CD8-positive, alpha-beta T cell (primary cell): ENCODE measurements at regions of chr16 and their contacts with region 1.

Region 1: GRCh38 chr16:30091474-30092372 is at the start of gene TBX6:
- DNase-seq: peak; percentile 86 to 97 (median 92)
- ATAC-seq: peak; percentile 82
- H3K4me3 ChIP-seq: peak within 1 kb of the TSS; percentile 59 to 69
- H3K4me3 Mint-ChIP-seq: peak within 1 kb of the TSS; percentile 87
- H3K27ac ChIP-seq: peak within 1 kb of the TSS; percentile 58 to 69
- H3K27ac Mint-ChIP-seq: peak within 1 kb of the TSS; percentile 91
- H3K4me1 ChIP-seq: peaks cover 55% of the 10 kb centered on the region
- H3K4me1 Mint-ChIP-seq: peaks cover 48% of the 10 kb centered on the region
- H3K27me3 ChIP-seq: no peaks in the 10 kb centered on the region
- H3K27me3 Mint-ChIP-seq: no peaks in the 10 kb centered on the region
- CTCF ChIP-seq: peak; percentile 73
- total RNA-seq, gene TBX6: 0.16 to 0.22 TPM

Region 2: GRCh38 chr16:29900102-29900887 is 191.4 kb before region 1 on chr16 and contains the start of gene ASPHD1:
- CTCF ChIA-PET with region 1: no interaction called
- POLR2A ChIA-PET with region 1: no interaction called
- intact Hi-C with region 1: no loop called
- DNase-seq: peak in 5 of 9 experiments; percentile 68 to 85 (median 80)
- ATAC-seq: peak; percentile 87
- H3K4me3 ChIP-seq: peak within 1 kb of the TSS; percentile 40 to 58
- H3K4me3 Mint-ChIP-seq: peak within 1 kb of the TSS; percentile 73
- H3K27ac ChIP-seq: no peak within 1 kb of the TSS
- H3K27ac Mint-ChIP-seq: no peak within 1 kb of the TSS
- H3K4me1 ChIP-seq: peaks cover 13% of the 10 kb centered on the region
- H3K4me1 Mint-ChIP-seq: peaks cover 8% of the 10 kb centered on the region
- H3K27me3 ChIP-seq: peaks cover 8 to 36% of the 10 kb centered on the region in 2 experiments
- H3K27me3 Mint-ChIP-seq: peaks cover 23% of the 10 kb centered on the region
- CTCF ChIP-seq: no peak
- total RNA-seq, gene ASPHD1: not detected

Region 3: GRCh38 chr16:30075507-30076275 is 16.0 kb before region 1 on chr16 and contains the start of gene PPP4C:
- CTCF ChIA-PET with region 1: interaction called, 34 read pairs
- POLR2A ChIA-PET with region 1: interaction called, 16 read pairs
- intact Hi-C with region 1: loop called (anchors 1 kb)
- DNase-seq: peak; percentile 65 to 94 (median 89)
- ATAC-seq: peak; percentile 88
- H3K4me3 ChIP-seq: peak within 1 kb of the TSS; percentile 96 to 99
- H3K4me3 Mint-ChIP-seq: peak within 1 kb of the TSS; percentile 93
- H3K27ac ChIP-seq: peak within 1 kb of the TSS; percentile 82 to 92
- H3K27ac Mint-ChIP-seq: peak within 1 kb of the TSS; percentile 96
- H3K4me1 ChIP-seq: peaks cover 31% of the 10 kb centered on the region
- H3K4me1 Mint-ChIP-seq: peaks cover 38% of the 10 kb centered on the region
- H3K27me3 ChIP-seq: no peaks in the 10 kb centered on the region
- H3K27me3 Mint-ChIP-seq: no peaks in the 10 kb centered on the region
- CTCF ChIP-seq: no peak
- total RNA-seq, gene PPP4C: 89.4 to 97.4 TPM

Region 4: DNA sequence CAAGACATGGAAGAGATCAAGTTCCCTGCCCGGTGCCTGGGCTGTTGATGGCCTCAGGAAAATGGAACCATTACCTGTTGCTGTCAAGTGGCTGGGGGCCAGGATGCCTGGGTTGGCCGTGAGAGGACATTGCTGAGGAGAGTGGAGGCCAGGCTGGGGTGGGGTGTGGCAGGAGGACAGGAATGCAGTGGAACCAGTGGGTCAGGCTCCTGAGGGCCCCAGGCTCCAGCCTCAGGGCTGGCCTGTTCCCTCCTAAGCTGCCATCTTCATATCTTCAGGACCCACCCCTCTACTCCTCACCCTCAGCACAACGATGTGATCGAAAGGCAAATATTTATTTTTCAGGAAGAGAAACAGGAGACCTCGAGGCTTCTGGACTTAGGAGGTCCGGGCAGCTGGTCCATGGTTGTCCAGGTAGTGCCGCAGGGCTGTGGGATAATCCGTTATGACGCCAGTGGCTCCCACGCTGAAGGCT is 12.8 kb after region 1 on chr16:
- CTCF ChIA-PET with region 1: interaction called, 17 read pairs
- POLR2A ChIA-PET with region 1: interaction called, 3 read pairs
- intact Hi-C with region 1: no loop called
- DNase-seq: no peak
- ATAC-seq: no peak
- H3K4me3 ChIP-seq: no peak overlapping the region
- H3K4me3 Mint-ChIP-seq: no peak overlapping the region
- H3K27ac ChIP-seq: no peak overlapping the region
- H3K27ac Mint-ChIP-seq: no peak overlapping the region
- H3K4me1 ChIP-seq: no peaks in the 10 kb centered on the region
- H3K4me1 Mint-ChIP-seq: no peaks in the 10 kb centered on the region
- H3K27me3 ChIP-seq: no peaks in the 10 kb centered on the region
- H3K27me3 Mint-ChIP-seq: no peaks in the 10 kb centered on the region
- CTCF ChIP-seq: no peak

Region 5: GRCh38 chr16:30122604-30123160 is 31.0 kb after region 1 on chr16:
- CTCF ChIA-PET with region 1: interaction called, 5 read pairs
- POLR2A ChIA-PET with region 1: interaction called, 5 read pairs
- intact Hi-C with region 1: loop called (anchors 1 kb)
- DNase-seq: peak in 7 of 9 experiments; percentile 14 to 58 (median 34)
- ATAC-seq: peak; percentile 29
- H3K4me3 ChIP-seq: peak overlapping the region; percentile 83 to 85
- H3K4me3 Mint-ChIP-seq: peak overlapping the region; percentile 85
- H3K27ac ChIP-seq: peak overlapping the region; percentile 34 to 55
- H3K27ac Mint-ChIP-seq: peak overlapping the region; percentile 87
- H3K4me1 ChIP-seq: peaks cover 24% of the 10 kb centered on the region
- H3K4me1 Mint-ChIP-seq: peaks cover 27% of the 10 kb centered on the region
- H3K27me3 ChIP-seq: no peaks in the 10 kb centered on the region
- H3K27me3 Mint-ChIP-seq: no peaks in the 10 kb centered on the region
- CTCF ChIP-seq: no peak

Region 6: DNA sequence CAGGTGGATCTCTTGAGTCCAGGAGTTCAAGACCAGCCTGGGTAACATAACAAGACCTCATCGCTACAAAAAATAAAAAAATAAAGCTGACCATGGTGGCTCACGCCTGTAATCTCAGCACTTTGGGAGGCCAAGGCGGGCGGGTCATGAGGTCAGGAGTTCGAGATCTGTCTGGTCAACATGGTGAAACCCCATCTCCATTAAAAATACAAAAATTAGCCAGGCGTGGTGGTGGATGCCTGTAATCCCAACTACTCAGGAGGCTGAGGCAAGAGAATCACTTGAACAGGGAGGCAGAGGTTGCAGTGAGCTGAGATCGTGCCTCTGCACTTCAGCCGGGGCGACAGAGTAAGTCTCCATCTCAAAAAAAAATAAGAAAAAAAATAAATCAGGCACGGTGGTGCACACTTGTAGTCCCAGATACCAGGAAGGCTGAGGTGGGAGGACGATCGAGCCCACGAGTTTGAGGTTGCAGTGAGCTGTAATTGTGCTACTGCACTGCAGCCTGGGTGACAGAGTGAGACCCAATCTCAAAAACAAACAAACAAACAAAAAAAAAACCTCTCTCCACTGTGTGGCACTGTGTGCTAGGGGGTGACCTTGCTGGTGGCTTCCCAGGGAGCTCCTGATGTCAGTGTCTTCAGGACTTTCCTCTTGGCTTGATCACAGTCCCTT is 51.1 kb after region 1 on chr16:
- CTCF ChIA-PET with region 1: interaction called, 7 read pairs
- POLR2A ChIA-PET with region 1: interaction called, 6 read pairs
- intact Hi-C with region 1: loop called in 1 of 2 experiments (anchors 5 kb)
- DNase-seq: peak in 6 of 9 experiments; percentile 14 to 77 (median 40)
- ATAC-seq: peak; percentile 72
- H3K4me3 ChIP-seq: no peak overlapping the region
- H3K4me3 Mint-ChIP-seq: no peak overlapping the region
- H3K27ac ChIP-seq: no peak overlapping the region
- H3K27ac Mint-ChIP-seq: peak overlapping the region; percentile 30
- H3K4me1 ChIP-seq: peaks cover 24% of the 10 kb centered on the region
- H3K4me1 Mint-ChIP-seq: peaks cover 22% of the 10 kb centered on the region
- H3K27me3 ChIP-seq: no peaks in the 10 kb centered on the region
- H3K27me3 Mint-ChIP-seq: no peaks in the 10 kb centered on the region
- CTCF ChIP-seq: peak; percentile 44

Region 7: GRCh38 chr16:30183233-30184095 is 91.7 kb after region 1 on chr16 and contains the start of gene CORO1A:
- CTCF ChIA-PET with region 1: interaction called, 17 read pairs
- POLR2A ChIA-PET with region 1: interaction called, 130 read pairs
- intact Hi-C with region 1: no loop called
- DNase-seq: peak; percentile 58 to 94 (median 84)
- ATAC-seq: peak; percentile 41
- H3K4me3 ChIP-seq: peak within 1 kb of the TSS; percentile 97 to 99
- H3K4me3 Mint-ChIP-seq: peak within 1 kb of the TSS; percentile 95
- H3K27ac ChIP-seq: peak within 1 kb of the TSS; percentile 80 to 91
- H3K27ac Mint-ChIP-seq: peak within 1 kb of the TSS; percentile 96
- H3K4me1 ChIP-seq: peaks cover 34% of the 10 kb centered on the region
- H3K4me1 Mint-ChIP-seq: peaks cover 39% of the 10 kb centered on the region
- H3K27me3 ChIP-seq: no peaks in the 10 kb centered on the region
- H3K27me3 Mint-ChIP-seq: no peaks in the 10 kb centered on the region
- CTCF ChIP-seq: no peak
- total RNA-seq, gene CORO1A: 352 to 364 TPM

Region 8: DNA sequence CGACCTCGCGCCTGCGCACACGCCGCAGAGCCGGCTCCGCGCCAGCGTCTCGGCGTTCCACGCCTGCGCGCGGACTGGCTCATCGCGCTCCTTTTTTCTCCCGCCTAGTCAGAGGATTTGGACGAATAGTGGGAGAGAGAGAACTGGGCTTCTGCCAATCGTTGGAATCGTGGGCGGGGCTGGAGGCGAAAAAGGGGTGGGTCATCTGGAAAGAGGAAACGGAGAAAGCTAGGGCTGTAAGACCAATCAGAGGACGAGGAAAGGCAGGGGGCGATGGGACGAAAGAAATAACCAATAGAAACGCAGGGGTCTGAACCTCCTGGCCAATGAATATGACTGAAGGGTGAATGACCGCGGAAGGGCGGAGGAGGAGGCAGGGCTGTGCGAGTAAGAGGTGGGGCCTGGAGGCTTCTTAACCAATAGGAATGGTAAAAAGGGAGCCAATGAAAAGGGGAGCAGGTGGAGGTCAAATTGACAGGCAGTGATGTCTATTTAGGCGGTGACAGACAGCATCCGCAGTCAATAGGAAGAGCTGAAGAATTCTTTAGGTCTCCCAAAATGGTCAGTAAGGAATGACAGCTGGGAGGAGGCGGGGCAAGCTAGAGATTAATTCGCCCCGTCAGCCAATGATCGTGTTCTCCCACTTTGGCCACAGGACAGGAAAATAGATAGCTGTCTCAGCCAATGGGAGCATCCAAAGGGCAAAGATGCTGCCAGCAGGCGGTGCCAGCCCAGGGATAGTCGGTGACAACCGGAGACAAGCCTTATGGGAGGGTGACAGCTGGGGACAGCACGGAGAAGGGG is 278.9 kb after region 1 on chr16 and contains the start of gene TBC1D10B:
- CTCF ChIA-PET with region 1: interaction called, 3 read pairs
- POLR2A ChIA-PET with region 1: interaction called, 4 read pairs
- intact Hi-C with region 1: loop called (anchors 2 to 10 kb)
- DNase-seq: peak; percentile 98 to 100 (median 99)
- ATAC-seq: peak; percentile 84
- H3K4me3 ChIP-seq: peak within 1 kb of the TSS; percentile 79 to 83
- H3K4me3 Mint-ChIP-seq: peak within 1 kb of the TSS; percentile 89
- H3K27ac ChIP-seq: peak within 1 kb of the TSS; percentile 36 to 84
- H3K27ac Mint-ChIP-seq: peak within 1 kb of the TSS; percentile 87
- H3K4me1 ChIP-seq: peaks cover 42% of the 10 kb centered on the region
- H3K4me1 Mint-ChIP-seq: peaks cover 54% of the 10 kb centered on the region
- H3K27me3 ChIP-seq: no peaks in the 10 kb centered on the region
- H3K27me3 Mint-ChIP-seq: no peaks in the 10 kb centered on the region
- CTCF ChIP-seq: no peak
- total RNA-seq, gene TBC1D10B: 12.3 to 13.8 TPM